Calu3 (cell line): ENCODE measurements at regions of chr10 and their contacts with region 1.

Region 1: DNA sequence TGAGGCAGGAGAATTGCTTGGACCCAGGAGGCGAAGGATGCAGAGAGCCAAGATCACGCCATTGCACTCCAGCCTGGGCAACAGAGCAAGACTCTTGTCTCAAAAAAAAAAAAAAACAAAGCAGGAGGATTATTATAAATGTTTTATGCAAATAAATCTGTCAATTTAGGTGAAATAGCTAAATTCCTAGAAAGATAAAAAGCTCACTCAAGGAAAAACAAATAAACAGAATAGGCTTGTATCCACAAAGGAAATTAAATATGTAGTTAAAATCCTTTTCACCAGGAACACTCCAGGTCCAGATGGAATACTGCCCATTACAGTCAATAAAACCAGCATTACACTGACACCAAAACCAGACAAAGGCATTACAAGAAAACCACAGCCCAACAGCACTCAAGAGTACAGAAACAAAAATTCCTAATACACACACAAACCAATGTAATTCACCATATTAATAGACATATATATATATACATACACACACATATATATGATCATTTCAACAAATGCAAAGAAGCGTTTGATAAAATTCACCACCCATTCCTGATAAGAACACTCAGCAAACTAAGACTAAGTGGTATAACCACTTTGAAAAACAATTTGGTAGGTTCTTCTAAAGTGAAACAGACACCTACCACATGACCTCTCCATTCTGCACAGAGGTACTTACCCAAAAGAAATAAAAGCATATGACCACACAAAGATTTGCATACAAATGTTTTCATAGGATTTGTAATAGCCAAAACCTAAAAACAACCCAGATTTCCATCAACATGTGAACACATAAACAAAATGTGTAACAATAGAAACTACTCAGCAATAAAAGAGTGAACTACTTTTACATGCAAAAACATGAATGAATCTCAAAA is 38.8 kb downstream of the ABI1 start:
- DNase-seq: no peak
- H3K4me3 Mint-ChIP-seq: no peak overlapping the region
- H3K27ac Mint-ChIP-seq: no peak overlapping the region
- H3K4me1 Mint-ChIP-seq: peaks cover 10% of the 10 kb centered on the region
- H3K27me3 Mint-ChIP-seq: no peaks in the 10 kb centered on the region
- CTCF ChIP-seq: no peak

Region 2: GRCh38 chr10:26773633-26774032 is 48.3 kb before region 1 on chr10:
- CTCF ChIA-PET with region 1: no interaction called
- intact Hi-C with region 1: loop called (anchors 5 kb)
- DNase-seq: no peak
- H3K4me3 Mint-ChIP-seq: no peak overlapping the region
- H3K27ac Mint-ChIP-seq: no peak overlapping the region
- H3K4me1 Mint-ChIP-seq: no peaks in the 10 kb centered on the region
- H3K27me3 Mint-ChIP-seq: no peaks in the 10 kb centered on the region
- CTCF ChIP-seq: no peak